Mucosa of descending colon (tissue), 3 donors: ENCODE measurements at regions of chr2 and their contacts with region 1.

Region 1: GRCh38 chr2:197113275-197113711 is 186.8 kb upstream of the PGAP1 start:
- DNase-seq: no peak
- ATAC-seq: no peak
- H3K4me3 ChIP-seq: no peak overlapping the region
- H3K4me1 ChIP-seq: no peaks in the 10 kb centered on the region
- CTCF ChIP-seq: peak; percentile 36

Region 2: GRCh38 chr2:197001921-197002320 is 111.4 kb before region 1 on chr2:
- intact Hi-C with region 1: no loop called
- DNase-seq: no peak
- ATAC-seq: no peak
- H3K4me3 ChIP-seq: no peak overlapping the region
- H3K4me1 ChIP-seq: peaks cover 5% of the 10 kb centered on the region
- CTCF ChIP-seq: no peak

Region 3: GRCh38 chr2:197168705-197169104 is 55.4 kb after region 1 on chr2:
- intact Hi-C with region 1: loop called in 1 of 2 experiments (anchors 10 kb)
- DNase-seq: peak in 2 of 3 donors; percentile 75 to 92
- ATAC-seq: peak; percentile 94
- H3K4me3 ChIP-seq: no peak overlapping the region
- H3K4me1 ChIP-seq: no peaks in the 10 kb centered on the region
- CTCF ChIP-seq: peak; percentile 23

Region 4: GRCh38 chr2:197378494-197379307 is 265.4 kb after region 1 on chr2:
- intact Hi-C with region 1: loop called (anchors 5 to 10 kb)
- DNase-seq: peak in 2 of 3 donors; percentile 42 to 60
- ATAC-seq: peak; percentile 81
- H3K4me3 ChIP-seq: no peak overlapping the region
- H3K4me1 ChIP-seq: peaks cover 3% of the 10 kb centered on the region
- CTCF ChIP-seq: no peak